ENCODE measurements at regions of chr3 and their contacts with region 1.

Region 1: DNA sequence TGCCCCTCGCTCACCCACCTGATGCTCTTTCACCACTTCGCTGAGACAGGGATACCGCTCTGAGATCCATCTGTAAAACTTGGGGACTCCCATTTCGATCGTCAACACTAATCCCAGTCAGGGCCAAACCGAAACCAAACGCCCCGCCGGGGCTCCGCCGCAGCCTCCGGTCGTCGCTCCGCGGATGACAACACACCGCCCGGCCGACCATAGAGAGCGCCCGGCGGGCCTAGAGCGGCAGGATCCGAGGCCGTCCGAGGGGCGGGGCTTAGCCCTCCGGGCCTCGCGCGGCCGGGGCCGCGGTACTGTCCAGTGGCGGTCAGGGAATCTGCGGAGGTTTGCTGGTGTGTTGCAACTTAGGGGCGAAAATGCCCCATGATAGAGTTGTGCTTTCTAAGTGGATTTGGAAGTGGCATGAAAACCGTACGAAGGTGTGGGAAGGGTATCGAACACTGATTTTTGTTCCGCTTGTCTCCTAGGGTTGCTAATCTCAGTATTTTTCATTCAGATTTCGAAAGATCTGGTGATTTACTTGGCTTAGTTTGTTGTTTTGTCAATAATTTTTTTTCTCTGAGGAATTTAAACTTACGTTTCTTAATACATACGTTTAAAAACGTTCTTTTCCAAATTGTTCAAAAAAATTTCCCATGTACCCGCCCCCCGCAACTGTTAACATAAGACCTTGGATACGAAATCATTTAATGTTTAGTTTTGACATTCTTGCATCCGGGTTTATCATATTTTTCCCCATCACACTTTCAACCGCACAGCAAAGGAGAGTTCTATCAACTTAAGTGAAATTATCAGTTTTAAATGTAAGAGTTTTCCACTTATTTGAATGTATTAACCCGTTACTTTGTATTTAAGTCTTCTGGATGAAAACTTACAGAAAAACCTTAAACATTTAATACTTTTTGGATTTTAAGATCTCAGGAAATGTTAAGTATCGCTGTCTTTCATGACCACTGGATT is at the start of gene XRN1:
- DNase-seq: peak; percentile 92 to 96 (median 95)
- ATAC-seq: peak; percentile 95
- H3K4me3 ChIP-seq: peak within 1 kb of the TSS; percentile 86 to 93
- H3K4me3 Mint-ChIP-seq: peak within 1 kb of the TSS; percentile 99
- H3K27ac ChIP-seq: peak within 1 kb of the TSS; percentile 97 to 99
- H3K27ac Mint-ChIP-seq: peak within 1 kb of the TSS; percentile 100
- H3K4me1 ChIP-seq: peaks cover 40% of the 10 kb centered on the region
- H3K4me1 Mint-ChIP-seq: peaks cover 43% of the 10 kb centered on the region
- H3K27me3 ChIP-seq: no peaks in the 10 kb centered on the region
- H3K27me3 Mint-ChIP-seq: no peaks in the 10 kb centered on the region
- CTCF ChIP-seq: no peak
- total RNA-seq, gene XRN1: 91.0 to 105 TPM

Region 2: GRCh38 chr3:141498598-141499223 is 949.4 kb before region 1 on chr3:
- CTCF ChIA-PET with region 1: no interaction called
- POLR2A ChIA-PET with region 1: no interaction called
- intact Hi-C with region 1: loop called in 1 of 2 experiments (anchors 10 kb)
- DNase-seq: peak; percentile 66 to 98 (median 86)
- ATAC-seq: peak; percentile 82
- H3K4me3 ChIP-seq: peak overlapping the region; percentile 31 to 44
- H3K4me3 Mint-ChIP-seq: peak overlapping the region; percentile 76
- H3K27ac ChIP-seq: peak overlapping the region; percentile 73 to 96
- H3K27ac Mint-ChIP-seq: peak overlapping the region; percentile 94
- H3K4me1 ChIP-seq: peaks cover 82% of the 10 kb centered on the region
- H3K4me1 Mint-ChIP-seq: peaks cover 68% of the 10 kb centered on the region
- H3K27me3 ChIP-seq: no peaks in the 10 kb centered on the region
- H3K27me3 Mint-ChIP-seq: no peaks in the 10 kb centered on the region
- CTCF ChIP-seq: no peak

Region 3: GRCh38 chr3:142226484-142226883 is 221.7 kb before region 1 on chr3:
- CTCF ChIA-PET with region 1: no interaction called
- POLR2A ChIA-PET with region 1: no interaction called
- intact Hi-C with region 1: loop called (anchors 1 to 5 kb)
- DNase-seq: no peak
- ATAC-seq: no peak
- H3K4me3 ChIP-seq: no peak overlapping the region
- H3K4me3 Mint-ChIP-seq: peak overlapping the region; percentile 62
- H3K27ac ChIP-seq: no peak overlapping the region
- H3K27ac Mint-ChIP-seq: no peak overlapping the region
- H3K4me1 ChIP-seq: peaks cover 4% of the 10 kb centered on the region
- H3K4me1 Mint-ChIP-seq: peaks cover 17% of the 10 kb centered on the region
- H3K27me3 ChIP-seq: no peaks in the 10 kb centered on the region
- H3K27me3 Mint-ChIP-seq: no peaks in the 10 kb centered on the region
- CTCF ChIP-seq: no peak

Region 4: GRCh38 chr3:142578327-142579223 is 130.4 kb after region 1 on chr3 and contains the start of gene ATR:
- CTCF ChIA-PET with region 1: no interaction called
- POLR2A ChIA-PET with region 1: interaction called, 8 read pairs
- intact Hi-C with region 1: loop called (anchors 1 kb)
- DNase-seq: peak; percentile 91 to 98 (median 97)
- ATAC-seq: peak; percentile 91
- H3K4me3 ChIP-seq: peak within 1 kb of the TSS; percentile 92 to 99
- H3K4me3 Mint-ChIP-seq: peak within 1 kb of the TSS; percentile 96
- H3K27ac ChIP-seq: peak within 1 kb of the TSS; percentile 97 to 99
- H3K27ac Mint-ChIP-seq: peak within 1 kb of the TSS; percentile 98
- H3K4me1 ChIP-seq: peaks cover 45% of the 10 kb centered on the region
- H3K4me1 Mint-ChIP-seq: peaks cover 52% of the 10 kb centered on the region
- H3K27me3 ChIP-seq: no peaks in the 10 kb centered on the region
- H3K27me3 Mint-ChIP-seq: no peaks in the 10 kb centered on the region
- CTCF ChIP-seq: no peak
- total RNA-seq, gene ATR: 26.7 to 28.0 TPM

Region 5: DNA sequence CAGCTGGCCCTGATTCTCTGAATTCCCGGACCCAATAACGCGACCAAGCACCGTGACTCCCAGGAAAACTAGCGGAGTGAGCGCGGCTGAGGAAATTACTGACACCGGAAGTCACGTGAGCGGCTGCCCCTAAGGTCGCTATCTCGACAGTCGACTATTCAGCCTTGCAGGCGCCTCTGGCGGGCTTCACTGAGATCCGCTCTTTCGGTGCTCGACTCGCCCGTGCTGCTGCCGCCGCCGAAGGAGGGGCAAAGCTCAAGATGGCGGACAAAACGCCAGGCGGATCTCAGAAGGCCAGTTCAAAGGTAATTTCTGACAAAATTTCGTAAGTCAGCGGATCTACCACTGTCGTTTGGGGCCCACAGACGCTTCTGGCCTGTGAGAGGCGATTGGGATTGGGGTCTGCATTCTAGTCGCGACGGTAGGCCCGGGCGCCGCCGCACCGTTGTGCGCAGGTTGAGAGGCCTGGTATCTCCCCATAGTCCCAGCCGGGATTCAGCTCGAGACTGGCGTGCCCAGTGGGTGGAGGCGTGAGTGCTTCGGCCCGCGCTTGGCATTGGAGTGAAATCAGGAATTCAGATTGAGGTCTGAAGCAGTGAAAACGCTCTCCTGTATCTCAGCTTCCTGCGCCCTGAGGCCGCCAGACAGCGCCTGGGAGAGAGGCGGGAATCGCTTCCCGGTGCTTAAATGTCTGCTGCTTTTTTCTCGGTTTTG is 553.4 kb after region 1 on chr3 and contains the start of gene U2SURP:
- CTCF ChIA-PET with region 1: no interaction called
- POLR2A ChIA-PET with region 1: interaction called, 7 read pairs
- intact Hi-C with region 1: loop called (anchors 1 kb)
- DNase-seq: peak; percentile 82 to 97 (median 90)
- ATAC-seq: peak; percentile 93
- H3K4me3 ChIP-seq: peak within 1 kb of the TSS; percentile 81 to 92
- H3K4me3 Mint-ChIP-seq: peak within 1 kb of the TSS; percentile 99
- H3K27ac ChIP-seq: peak within 1 kb of the TSS; percentile 91 to 92
- H3K27ac Mint-ChIP-seq: peak within 1 kb of the TSS; percentile 99
- H3K4me1 ChIP-seq: peaks cover 34% of the 10 kb centered on the region
- H3K4me1 Mint-ChIP-seq: peaks cover 42% of the 10 kb centered on the region
- H3K27me3 ChIP-seq: no peaks in the 10 kb centered on the region
- H3K27me3 Mint-ChIP-seq: no peaks in the 10 kb centered on the region
- CTCF ChIP-seq: no peak
- total RNA-seq, gene U2SURP: 186 TPM

Region 6: GRCh38 chr3:143192193-143192592 is 744.1 kb after region 1 on chr3:
- CTCF ChIA-PET with region 1: no interaction called
- POLR2A ChIA-PET with region 1: no interaction called
- intact Hi-C with region 1: no loop called
- DNase-seq: no peak
- ATAC-seq: no peak
- H3K4me3 ChIP-seq: no peak overlapping the region
- H3K4me3 Mint-ChIP-seq: peak overlapping the region; percentile 49
- H3K27ac ChIP-seq: no peak overlapping the region
- H3K27ac Mint-ChIP-seq: peak overlapping the region; percentile 8
- H3K4me1 ChIP-seq: peaks cover 14% of the 10 kb centered on the region
- H3K4me1 Mint-ChIP-seq: peaks cover 28% of the 10 kb centered on the region
- H3K27me3 ChIP-seq: no peaks in the 10 kb centered on the region
- H3K27me3 Mint-ChIP-seq: no peaks in the 10 kb centered on the region
- CTCF ChIP-seq: no peak

Region 7: GRCh38 chr3:143972505-143973255 is 1524.5 kb after region 1 on chr3:
- CTCF ChIA-PET with region 1: no interaction called
- POLR2A ChIA-PET with region 1: no interaction called
- intact Hi-C with region 1: loop called in 1 of 2 experiments (anchors 5 kb)
- DNase-seq: peak; percentile 28 to 91 (median 52)
- ATAC-seq: no peak
- H3K4me3 ChIP-seq: peak overlapping the region; percentile 75 to 89
- H3K4me3 Mint-ChIP-seq: peak overlapping the region; percentile 95
- H3K27ac ChIP-seq: peak overlapping the region; percentile 69 to 82
- H3K27ac Mint-ChIP-seq: peak overlapping the region; percentile 93
- H3K4me1 ChIP-seq: peaks cover 34% of the 10 kb centered on the region
- H3K4me1 Mint-ChIP-seq: peaks cover 39% of the 10 kb centered on the region
- H3K27me3 ChIP-seq: no peaks in the 10 kb centered on the region
- H3K27me3 Mint-ChIP-seq: peaks cover 5% of the 10 kb centered on the region
- CTCF ChIP-seq: peak; percentile 51